ENCODE measurements at regions of chr3 and their contacts with region 1.

Region 1: GRCh38 chr3:111045564-111045963 is 26.1 kb upstream of the NECTIN3 start:
- DNase-seq: no peak
- ATAC-seq: no peak
- H3K4me3 ChIP-seq: no peak overlapping the region
- H3K27ac ChIP-seq: no peak overlapping the region
- H3K4me1 ChIP-seq: peaks cover 28% of the 10 kb centered on the region
- H3K27me3 ChIP-seq: no peaks in the 10 kb centered on the region
- CTCF ChIP-seq: no peak
- EP300 ChIP-seq: no peak
- POLR2A ChIP-seq: no peak
- RAD21 ChIP-seq: no peak

Region 2: DNA sequence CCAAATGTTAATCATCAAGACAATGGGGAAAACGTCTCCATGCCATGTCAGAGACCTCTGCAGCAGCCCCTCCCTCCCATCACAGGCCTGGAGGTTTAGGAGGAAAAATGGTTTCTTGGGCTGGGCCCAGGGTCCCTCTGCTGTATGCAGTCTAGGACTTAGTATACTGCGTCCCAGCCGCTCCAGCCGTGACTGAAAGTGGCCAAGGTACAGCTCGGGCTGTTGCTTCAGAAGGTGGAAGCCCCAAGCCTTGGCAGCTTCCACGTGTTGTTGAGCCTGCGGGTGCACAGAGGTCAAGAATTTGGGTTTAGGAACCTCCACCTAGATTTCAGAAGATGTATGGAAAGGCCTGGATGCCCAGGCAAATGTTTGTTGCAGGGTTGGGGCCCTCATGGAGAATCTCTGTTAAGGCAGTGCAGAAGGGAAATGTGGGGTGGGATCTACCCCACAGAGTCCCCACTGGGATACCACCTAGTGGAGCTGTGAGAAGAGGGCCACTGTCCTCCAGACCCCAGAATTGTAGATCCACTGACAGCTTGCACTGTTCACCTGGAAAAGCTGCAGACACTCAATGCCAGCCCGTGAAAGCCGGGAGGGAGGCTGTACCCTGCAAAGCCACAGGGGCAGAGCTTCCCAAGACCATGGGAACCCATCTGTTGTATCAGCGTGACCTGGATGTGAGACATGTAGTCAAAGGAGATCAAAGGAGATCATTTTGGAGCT is 51.1 kb after region 1 on chr3:
- CTCF ChIA-PET with region 1: no interaction called
- POLR2A ChIA-PET with region 1: no interaction called
- in situ Hi-C with region 1: no loop called
- intact Hi-C with region 1: no loop called
- DNase-seq: no peak
- ATAC-seq: no peak
- H3K4me3 ChIP-seq: no peak overlapping the region
- H3K27ac ChIP-seq: no peak overlapping the region
- H3K4me1 ChIP-seq: peaks cover 8% of the 10 kb centered on the region; the same call in 1 of the 2 replicates
- H3K27me3 ChIP-seq: no peaks in the 10 kb centered on the region
- CTCF ChIP-seq: no peak
- EP300 ChIP-seq: no peak
- POLR2A ChIP-seq: no peak
- RAD21 ChIP-seq: no peak

Region 3: DNA sequence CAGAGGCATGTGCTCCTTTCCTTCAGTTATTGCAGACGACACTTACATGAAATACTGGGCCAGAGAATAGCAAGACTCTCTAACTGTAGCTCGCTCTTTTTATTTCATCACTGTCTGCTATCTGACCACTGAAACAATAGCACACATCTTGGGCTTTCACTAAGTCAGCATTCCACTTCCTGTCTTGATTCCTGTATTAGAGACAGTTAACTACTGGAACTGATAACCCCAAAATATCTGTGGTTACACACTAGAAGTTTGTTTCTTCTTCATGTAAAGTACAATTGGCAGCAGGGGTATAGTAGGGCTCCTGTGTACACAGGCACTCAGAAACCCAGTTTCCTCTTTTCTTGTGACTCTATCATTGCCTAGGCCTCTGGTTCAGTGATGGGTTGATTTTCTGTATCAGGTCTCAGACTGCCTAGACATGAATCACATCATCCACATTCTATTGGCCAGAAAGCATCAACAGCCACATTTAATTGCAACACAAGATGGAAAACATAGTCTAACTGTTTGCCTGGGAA is 266.2 kb after region 1 on chr3:
- CTCF ChIA-PET with region 1: no interaction called
- POLR2A ChIA-PET with region 1: no interaction called
- in situ Hi-C with region 1: no loop called
- intact Hi-C with region 1: no loop called
- DNase-seq: no peak
- ATAC-seq: no peak
- H3K4me3 ChIP-seq: no peak overlapping the region
- H3K27ac ChIP-seq: no peak overlapping the region
- H3K4me1 ChIP-seq: no peaks in the 10 kb centered on the region
- H3K27me3 ChIP-seq: no peaks in the 10 kb centered on the region
- CTCF ChIP-seq: no peak
- EP300 ChIP-seq: no peak
- POLR2A ChIP-seq: no peak
- RAD21 ChIP-seq: no peak

Region 4: DNA sequence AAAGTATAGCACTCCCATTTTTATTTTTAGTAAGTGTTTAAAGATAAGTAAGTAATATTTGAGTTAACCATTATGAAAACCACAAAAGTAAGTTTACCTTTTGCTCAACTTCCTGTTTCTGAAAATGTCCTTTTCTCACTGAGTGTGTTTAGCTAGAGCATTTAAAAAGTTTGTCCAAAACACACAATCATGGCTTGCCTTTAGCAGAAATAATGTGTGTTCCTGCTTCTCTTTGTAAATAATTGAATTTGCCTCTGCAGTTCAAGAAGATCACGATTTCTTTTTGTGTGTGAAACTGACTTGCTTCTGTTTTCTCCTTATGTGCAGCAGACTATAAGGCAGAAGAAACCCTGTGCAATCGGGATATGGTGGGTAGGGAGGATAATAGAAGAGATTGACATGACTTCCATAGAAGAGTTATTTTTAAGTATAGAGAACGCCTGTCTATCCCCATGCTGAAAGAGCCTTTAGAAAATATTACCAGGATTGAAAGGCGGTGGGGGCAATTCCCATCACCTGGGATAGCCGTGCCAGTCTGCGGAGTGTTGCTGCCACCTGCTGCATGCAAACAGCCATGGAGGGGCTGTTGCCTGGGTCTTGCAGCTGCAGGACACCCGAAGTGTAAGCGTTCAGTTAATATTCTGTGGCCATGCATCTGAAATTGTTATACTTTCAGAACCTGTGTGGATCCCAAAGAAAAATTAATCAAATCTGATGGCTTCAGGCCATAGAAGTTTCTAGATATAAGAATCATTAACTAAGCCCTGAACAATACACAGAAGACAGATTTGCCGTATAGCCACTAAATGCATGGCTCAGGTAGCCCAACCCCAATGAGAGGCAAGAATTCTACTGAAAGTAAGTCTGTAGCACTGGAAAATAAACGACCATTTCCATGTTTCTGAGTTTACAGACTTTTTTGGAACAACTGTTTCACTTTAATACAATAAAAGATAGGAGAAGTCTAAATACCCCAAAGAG is 494.1 kb after region 1 on chr3:
- CTCF ChIA-PET with region 1: no interaction called
- POLR2A ChIA-PET with region 1: no interaction called
- in situ Hi-C with region 1: loop called (anchors 25 kb)
- intact Hi-C with region 1: no loop called
- DNase-seq: peak; percentile 34
- ATAC-seq: peak; percentile 99
- H3K4me3 ChIP-seq: no peak overlapping the region
- H3K27ac ChIP-seq: no peak overlapping the region
- H3K4me1 ChIP-seq: peaks cover 14% of the 10 kb centered on the region
- H3K27me3 ChIP-seq: no peaks in the 10 kb centered on the region
- CTCF ChIP-seq: peak; percentile 83
- EP300 ChIP-seq: no peak
- POLR2A ChIP-seq: no peak
- RAD21 ChIP-seq: peak; percentile 77